ENCODE measurements at regions of chr5 and their contacts with region 1.

Region 1: DNA sequence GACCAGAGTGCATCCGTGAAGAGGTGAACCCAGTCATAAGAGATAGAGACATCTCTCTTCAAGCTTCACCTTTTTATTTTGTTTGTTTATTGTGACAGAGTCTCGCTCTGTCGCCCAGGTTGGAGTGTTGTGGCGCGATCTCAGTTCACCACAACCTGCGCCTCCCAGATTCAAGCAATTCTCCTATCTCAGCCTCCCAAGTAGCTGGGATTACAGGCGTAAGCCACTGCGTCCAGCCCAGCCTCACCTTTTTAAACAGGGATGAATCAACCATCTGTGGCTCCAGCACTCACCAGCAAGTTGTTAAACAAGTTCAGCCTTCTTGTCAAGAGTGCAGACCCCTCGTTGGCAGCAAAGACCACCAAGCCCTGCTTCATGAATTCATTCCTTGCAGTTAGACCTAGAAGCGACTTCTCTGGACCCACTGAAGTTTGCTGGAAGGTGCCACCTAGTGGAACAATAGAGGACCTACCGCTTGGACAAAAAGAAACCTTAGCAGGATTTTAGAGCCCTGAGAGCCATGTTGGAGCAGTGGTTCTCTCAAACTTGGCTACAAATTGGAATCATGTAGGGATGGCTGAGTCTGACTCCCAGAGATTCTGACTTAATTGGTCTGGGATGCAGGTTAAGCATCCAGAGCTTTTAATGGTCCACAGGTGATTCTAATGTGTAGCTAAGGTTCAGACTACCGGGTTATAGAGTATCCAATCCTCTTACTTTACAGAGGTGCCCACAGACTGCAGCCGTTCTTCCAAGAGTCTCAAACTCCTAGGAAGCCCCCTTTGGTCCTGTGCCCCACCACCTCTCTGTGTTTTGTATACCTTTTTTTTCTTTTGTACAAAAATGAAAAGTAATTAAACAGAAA is 10.5 kb upstream of the GALNT10 start:
- DNase-seq: peak; percentile 52
- H3K4me3 ChIP-seq: no peak overlapping the region
- H3K27ac ChIP-seq: no peak overlapping the region
- H3K27me3 ChIP-seq: no peaks in the 10 kb centered on the region
- CTCF ChIP-seq: peak; percentile 89

Region 2: GRCh38 chr5:154072414-154073171 is 107.5 kb before region 1 on chr5:
- in situ Hi-C with region 1: loop called (anchors 10 kb)
- DNase-seq: peak; percentile 53
- H3K4me3 ChIP-seq: no peak overlapping the region
- H3K27ac ChIP-seq: no peak overlapping the region
- H3K27me3 ChIP-seq: no peaks in the 10 kb centered on the region
- CTCF ChIP-seq: peak; percentile 94

Region 3: DNA sequence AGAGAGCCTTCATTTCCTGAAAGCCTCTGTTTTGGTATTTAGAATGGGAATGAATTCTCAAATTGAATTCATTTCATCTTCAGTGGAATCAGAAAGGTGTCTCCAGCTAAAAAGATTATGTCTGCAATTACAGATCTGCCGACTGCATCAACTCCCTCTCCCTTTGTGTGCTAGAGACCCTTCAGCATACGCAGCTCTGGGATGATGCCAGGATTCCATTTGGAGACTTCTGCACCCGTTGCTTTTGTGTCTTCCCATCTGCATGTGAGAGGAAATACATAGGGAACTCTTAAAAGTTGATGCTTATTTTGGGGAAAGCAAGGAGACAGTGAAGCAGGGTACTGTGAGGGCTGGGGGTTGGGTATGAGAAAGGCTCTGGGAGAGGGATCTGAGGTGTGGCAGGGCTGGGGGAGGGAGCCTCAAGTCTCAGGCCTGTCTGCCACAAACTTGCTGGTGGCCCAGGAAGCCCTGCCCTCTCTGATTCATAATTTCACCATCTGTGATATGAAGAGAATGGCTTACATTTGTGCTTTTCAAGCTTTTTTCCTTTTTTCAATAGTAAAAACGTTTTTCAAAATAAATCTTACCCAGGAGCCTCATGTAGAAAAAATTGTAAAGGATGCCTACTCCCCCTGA is 176.1 kb after region 1 on chr5:
- in situ Hi-C with region 1: no loop called
- DNase-seq: peak; percentile 58
- H3K4me3 ChIP-seq: no peak overlapping the region
- H3K27ac ChIP-seq: peak overlapping the region; percentile 17
- H3K27me3 ChIP-seq: no peaks in the 10 kb centered on the region
- CTCF ChIP-seq: no peak

Region 4: DNA sequence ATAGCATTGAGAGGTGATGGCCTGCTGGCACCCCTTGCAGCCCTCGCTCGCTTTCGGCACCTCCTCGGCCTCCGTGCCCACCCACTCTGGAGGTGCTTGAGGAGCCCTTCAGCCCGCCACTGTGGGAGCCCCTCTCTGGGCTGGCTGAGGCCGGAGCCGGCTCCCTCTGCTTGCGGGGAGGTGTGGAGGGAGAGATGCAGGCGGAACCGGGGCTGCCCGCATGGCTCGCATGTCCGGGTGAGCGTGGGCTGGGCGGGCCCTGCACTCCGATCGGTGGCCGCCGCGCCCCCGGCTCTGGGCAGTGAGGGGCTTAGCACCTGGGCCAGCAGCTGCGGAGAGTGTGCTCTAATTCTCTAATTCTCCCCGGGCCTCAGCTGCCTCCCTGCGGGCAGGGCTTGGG is 934.6 kb after region 1 on chr5:
- in situ Hi-C with region 1: no loop called
- DNase-seq: no peak
- H3K4me3 ChIP-seq: no peak overlapping the region
- H3K27ac ChIP-seq: no peak overlapping the region
- H3K27me3 ChIP-seq: no peaks in the 10 kb centered on the region
- CTCF ChIP-seq: no peak